Dendritic cell treated with granulocyte-macrophage colony-stimulating factor and Interleukin-4, amounts not matched to agents 40 ng/mL and 50 ng/mL, for 4 days (primary cell): ENCODE measurements at regions of chr9 and their contacts with region 1.

Region 1: DNA sequence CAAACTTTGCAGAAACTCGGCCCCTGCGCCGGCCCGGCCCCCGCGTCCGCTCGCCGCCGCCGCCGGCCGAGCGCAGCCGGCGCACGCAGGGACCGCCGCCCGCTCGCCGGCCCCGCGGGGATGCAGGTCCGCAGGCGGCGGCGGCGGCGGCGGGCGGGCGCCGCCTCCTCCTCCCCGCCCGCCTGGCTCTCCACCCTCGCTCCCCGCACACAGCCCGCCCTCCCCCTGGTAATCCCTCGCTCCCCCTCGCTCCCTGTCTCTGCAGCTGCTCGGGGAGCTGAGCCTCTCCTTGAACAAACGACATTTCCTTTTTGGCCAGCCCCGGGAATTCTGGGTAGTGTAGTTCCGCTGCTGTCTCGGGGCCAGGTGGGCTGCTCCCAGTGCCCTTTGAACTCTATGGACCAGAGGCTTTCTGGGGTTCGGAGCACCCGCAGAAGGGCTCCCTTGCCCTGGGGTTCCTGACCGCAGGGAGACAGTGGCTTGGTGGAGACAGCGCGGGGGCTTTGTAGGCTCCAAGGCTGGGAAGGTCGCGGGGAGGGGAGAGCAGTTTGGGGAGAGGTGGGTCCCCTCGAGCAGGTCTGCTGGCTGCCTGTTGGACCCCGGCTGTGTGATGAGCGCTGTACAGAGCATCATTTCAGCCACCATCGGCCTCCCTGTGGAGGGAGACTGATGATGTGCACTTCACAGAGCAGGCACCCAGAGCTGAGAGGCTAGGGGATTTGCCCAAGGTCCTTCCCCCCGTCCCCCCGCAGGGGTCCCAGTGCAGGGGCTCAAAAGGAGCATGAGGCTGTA is 1.8 kb upstream of the FAM78A start:
- H3K4me3 Mint-ChIP-seq: peak overlapping the region; percentile 77
- H3K27ac Mint-ChIP-seq: peak overlapping the region; percentile 92
- H3K4me1 Mint-ChIP-seq: peaks cover 47% of the 10 kb centered on the region
- H3K27me3 Mint-ChIP-seq: peaks cover 26% of the 10 kb centered on the region

Region 2: DNA sequence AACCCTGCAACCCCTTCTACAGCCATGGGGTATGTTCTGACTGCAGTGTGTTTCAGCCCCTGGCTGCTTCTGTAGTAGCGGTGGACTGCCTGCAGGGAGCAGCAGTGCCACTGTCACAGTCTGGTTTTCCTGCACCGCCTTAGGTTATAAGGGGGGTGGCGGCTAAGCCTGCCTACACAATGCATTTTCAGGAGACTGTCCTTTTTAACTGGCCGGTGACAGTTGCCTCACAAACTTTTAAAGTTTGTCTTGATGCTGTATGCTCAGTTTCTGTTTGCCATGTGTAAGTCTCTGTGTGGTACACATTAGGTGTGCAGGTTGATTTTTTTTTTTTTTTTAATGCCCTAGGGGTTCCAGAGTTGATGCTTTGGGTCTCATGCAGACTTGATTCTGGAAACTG is 99.7 kb before region 1 on chr9:
- intact Hi-C with region 1: loop called (anchors 10 kb)
- H3K4me3 Mint-ChIP-seq: no peak overlapping the region
- H3K27ac Mint-ChIP-seq: no peak overlapping the region
- H3K4me1 Mint-ChIP-seq: peaks cover 21% of the 10 kb centered on the region
- H3K27me3 Mint-ChIP-seq: no peaks in the 10 kb centered on the region

Region 3: GRCh38 chr9:131237931-131238401 is 40.1 kb before region 1 on chr9:
- intact Hi-C with region 1: loop called (anchors 5 kb)
- H3K4me3 Mint-ChIP-seq: peak overlapping the region; percentile 55
- H3K27ac Mint-ChIP-seq: peak overlapping the region; percentile 85
- H3K4me1 Mint-ChIP-seq: peaks cover 40% of the 10 kb centered on the region
- H3K27me3 Mint-ChIP-seq: peaks cover 8% of the 10 kb centered on the region

Region 4: GRCh38 chr9:131255676-131256197 is 22.4 kb before region 1 on chr9:
- intact Hi-C with region 1: loop called (anchors 2 kb)
- H3K4me3 Mint-ChIP-seq: peak overlapping the region; percentile 72
- H3K27ac Mint-ChIP-seq: peak overlapping the region; percentile 90
- H3K4me1 Mint-ChIP-seq: peaks cover 87% of the 10 kb centered on the region
- H3K27me3 Mint-ChIP-seq: no peaks in the 10 kb centered on the region

Region 5: DNA sequence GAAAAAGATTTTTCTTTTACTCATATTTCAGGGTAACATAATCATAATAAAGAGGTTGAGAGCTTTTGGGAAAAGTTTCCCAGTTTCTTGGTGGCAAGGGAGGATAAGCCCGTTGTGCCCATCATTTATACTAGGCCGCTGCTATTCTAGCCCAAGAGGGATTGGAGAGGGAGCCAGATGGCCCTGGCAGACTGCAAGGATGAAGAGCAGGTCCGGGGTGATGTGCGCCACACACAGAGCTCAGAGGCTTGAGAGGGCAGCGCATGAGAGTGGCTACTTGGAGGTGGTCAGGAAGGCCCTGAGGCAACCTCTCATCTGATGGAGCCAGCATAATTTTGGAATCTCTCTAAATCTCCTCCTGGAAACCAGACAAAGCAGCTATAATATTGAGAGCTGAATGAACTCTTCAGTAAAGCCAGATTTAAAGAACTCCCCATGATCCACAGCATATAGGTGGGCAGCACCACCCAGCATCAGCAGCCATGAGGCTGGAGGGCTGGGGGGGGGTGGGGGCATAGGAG is 691.4 kb after region 1 on chr9:
- intact Hi-C with region 1: no loop called
- H3K4me3 Mint-ChIP-seq: no peak overlapping the region
- H3K27ac Mint-ChIP-seq: no peak overlapping the region
- H3K4me1 Mint-ChIP-seq: no peaks in the 10 kb centered on the region
- H3K27me3 Mint-ChIP-seq: no peaks in the 10 kb centered on the region